ENCODE measurements at regions of chr11 and their contacts with region 1.

Region 1: DNA sequence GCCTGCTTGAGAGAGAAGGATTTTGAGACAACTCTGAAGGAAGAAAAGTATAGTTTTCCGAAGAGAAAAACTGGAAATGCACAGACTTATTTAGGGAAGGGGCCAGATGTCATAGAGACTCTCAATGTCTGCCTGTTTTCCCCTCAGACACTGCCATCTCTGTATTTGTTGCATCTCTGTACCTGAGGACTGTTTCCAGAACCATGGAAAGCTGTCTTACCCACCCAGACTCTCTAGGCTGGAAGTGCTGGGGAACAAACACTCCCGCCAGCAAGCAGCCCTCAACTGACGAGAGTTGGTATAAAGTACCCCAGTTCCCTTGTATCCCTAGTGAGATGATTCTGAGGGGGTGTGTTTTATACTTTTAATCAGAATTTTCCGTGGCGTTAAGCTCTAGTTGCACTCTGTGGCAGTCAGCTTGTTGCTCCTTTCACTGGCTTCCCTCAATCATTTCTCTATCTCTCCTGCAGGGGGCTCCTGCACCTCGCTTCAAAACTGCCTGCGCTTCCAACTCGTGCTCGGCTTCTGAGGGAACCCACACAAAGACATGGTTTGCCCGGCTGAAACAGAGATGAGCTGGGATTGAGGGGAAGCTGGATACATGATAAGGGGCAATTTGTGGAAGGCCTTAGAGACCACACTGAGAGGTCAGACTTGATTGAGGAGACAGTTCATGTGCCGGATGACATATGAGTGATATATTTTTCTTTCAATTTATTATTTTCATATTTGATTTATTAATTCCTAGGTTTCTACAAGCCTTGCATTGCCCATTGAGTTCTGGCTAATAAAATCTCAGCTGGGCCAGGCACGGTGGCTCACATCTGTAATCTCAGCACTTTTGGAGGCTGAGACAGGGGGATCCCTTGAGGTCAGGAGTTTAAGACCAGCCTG is 36.9 kb upstream of the CLPB start:
- DNase-seq: peak; percentile 69
- CTCF ChIP-seq: peak; percentile 79

Region 2: GRCh38 chr11:72012897-72013721 is 458.1 kb before region 1 on chr11:
- CTCF ChIA-PET with region 1: no interaction called
- POLR2A ChIA-PET with region 1: no interaction called
- DNase-seq: no peak
- CTCF ChIP-seq: no peak

Region 3: DNA sequence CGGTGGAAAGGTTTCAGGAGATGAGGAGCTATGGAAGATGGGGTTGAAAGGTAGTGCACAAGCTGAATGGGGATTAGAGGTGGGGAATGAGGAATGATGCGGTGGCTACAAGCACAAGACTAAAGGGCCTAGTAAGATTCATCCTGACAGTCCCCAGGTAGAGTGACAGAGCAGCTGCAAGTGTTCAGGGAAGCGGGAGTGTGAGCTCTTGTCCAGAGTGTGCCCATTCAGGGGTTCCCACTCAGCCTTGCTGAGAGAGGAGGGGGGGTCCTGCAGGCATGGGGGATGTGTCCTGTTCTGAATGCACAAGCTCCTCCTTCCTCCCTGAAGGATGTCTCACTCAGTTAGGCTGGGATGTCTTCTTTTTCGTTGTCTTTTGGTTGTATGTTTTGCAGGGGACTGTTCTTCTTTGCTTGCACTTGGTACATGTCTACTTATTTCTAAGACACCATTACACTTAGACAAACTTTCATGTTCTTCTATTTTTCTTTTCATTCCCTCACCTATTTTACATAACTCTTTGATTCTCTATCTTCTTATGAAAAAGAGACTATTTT is 11.1 kb before region 1 on chr11:
- CTCF ChIA-PET with region 1: interaction called, 20 read pairs
- POLR2A ChIA-PET with region 1: no interaction called
- DNase-seq: no peak
- CTCF ChIP-seq: no peak

Region 4: GRCh38 chr11:72553706-72554105 is 82.5 kb after region 1 on chr11:
- CTCF ChIA-PET with region 1: interaction called, 25 read pairs
- POLR2A ChIA-PET with region 1: no interaction called
- DNase-seq: no peak
- CTCF ChIP-seq: peak; percentile 38

Region 5: GRCh38 chr11:72579816-72580641 is 108.8 kb after region 1 on chr11:
- CTCF ChIA-PET with region 1: interaction called, 25 read pairs
- POLR2A ChIA-PET with region 1: no interaction called
- DNase-seq: no peak
- CTCF ChIP-seq: no peak

Region 6: DNA sequence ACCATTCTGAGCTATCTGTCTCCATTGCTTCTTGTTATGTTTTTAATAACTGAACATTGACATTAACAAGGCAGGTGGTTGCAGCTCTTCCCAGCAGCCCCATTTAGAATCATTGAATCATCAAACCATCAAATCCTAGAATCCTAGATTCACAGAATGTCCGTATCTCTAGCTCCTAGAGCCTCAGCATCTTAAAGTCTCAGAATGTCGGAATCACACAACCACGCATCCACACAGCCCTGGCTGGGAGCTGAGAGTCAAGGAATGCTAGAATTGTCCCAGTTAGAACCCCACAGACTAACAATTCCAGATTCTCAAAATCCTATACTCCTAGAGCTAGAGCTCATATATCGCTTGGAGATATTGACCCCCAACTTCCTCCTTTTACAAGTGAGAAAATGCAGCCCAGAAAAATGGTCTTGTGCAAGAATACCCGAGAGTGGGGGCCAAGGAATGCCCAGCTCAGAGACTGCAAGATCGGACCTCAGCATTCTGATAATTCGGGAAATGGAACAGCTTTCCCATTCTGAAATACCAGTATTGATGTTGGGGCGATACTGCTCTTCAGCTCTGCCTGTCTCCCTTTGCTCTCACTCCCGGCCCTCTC is 164.2 kb after region 1 on chr11:
- CTCF ChIA-PET with region 1: interaction called, 23 read pairs
- POLR2A ChIA-PET with region 1: no interaction called
- DNase-seq: no peak
- CTCF ChIP-seq: no peak

Region 7: GRCh38 chr11:72683782-72684200 is 212.5 kb after region 1 on chr11:
- CTCF ChIA-PET with region 1: interaction called, 30 read pairs
- POLR2A ChIA-PET with region 1: no interaction called
- DNase-seq: peak; percentile 85
- CTCF ChIP-seq: peak; percentile 96

Measured in GM10248 (cell line).